AG04449 (cell line): ENCODE measurements at regions of chr11 and their contacts with region 1.

Region 1: GRCh38 chr11:72015511-72016171 is 16.9 kb downstream of the IL18BP start:
- DNase-seq: no peak
- H3K4me3 ChIP-seq: no peak overlapping the region
- CTCF ChIP-seq: peak; percentile 58

Region 2: GRCh38 chr11:72004936-72005500 is 10.6 kb before region 1 on chr11:
- CTCF ChIA-PET with region 1: interaction called, 17 read pairs
- POLR2A ChIA-PET with region 1: interaction called, 5 read pairs
- DNase-seq: no peak
- H3K4me3 ChIP-seq: no peak overlapping the region
- CTCF ChIP-seq: no peak

Region 3: GRCh38 chr11:72102946-72103753 is 87.5 kb after region 1 on chr11 and contains the start of gene LAMTOR1:
- CTCF ChIA-PET with region 1: interaction called, 540 read pairs
- POLR2A ChIA-PET with region 1: no interaction called
- DNase-seq: peak; percentile 91
- H3K4me3 ChIP-seq: peak within 1 kb of the TSS; percentile 78
- CTCF ChIP-seq: peak; percentile 40

Region 4: GRCh38 chr11:72349616-72350218 is 334.1 kb after region 1 on chr11:
- CTCF ChIA-PET with region 1: no interaction called
- POLR2A ChIA-PET with region 1: no interaction called
- DNase-seq: no peak
- H3K4me3 ChIP-seq: no peak overlapping the region
- CTCF ChIP-seq: no peak